ENCODE measurements at regions of chr5 and their contacts with region 1.

Region 1: DNA sequence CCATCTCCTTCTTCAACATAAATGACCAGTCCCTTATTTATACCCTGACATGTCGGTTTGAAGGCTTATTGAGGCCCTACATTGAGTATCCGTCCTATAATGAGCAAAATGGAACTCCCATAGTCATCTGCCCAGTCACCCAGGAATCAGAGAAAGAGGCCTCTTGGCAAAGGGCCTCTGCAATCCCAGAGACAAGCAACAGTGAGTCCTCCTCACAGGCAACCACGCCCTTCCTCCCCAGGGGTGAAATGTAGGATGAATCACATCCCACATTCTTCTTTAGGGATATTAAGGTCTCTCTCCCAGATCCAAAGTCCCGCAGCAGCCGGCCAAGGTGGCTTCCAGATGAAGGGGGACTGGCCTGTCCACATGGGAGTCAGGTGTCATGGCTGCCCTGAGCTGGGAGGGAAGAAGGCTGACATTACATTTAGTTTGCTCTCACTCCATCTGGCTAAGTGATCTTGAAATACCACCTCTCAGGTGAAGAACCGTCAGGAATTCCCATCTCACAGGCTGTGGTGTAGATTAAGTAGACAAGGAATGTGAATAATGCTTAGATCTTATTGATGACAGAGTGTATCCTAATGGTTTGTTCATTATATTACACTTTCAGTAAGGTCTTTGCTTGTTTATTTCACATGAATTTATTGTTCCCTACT is 38.2 kb upstream of the BTNL3 start:
- DNase-seq: no peak
- ATAC-seq: no peak
- H3K4me3 ChIP-seq: no peak overlapping the region
- H3K27ac ChIP-seq: no peak overlapping the region
- H3K4me1 ChIP-seq: no peaks in the 10 kb centered on the region
- H3K27me3 ChIP-seq: no peaks in the 10 kb centered on the region
- CTCF ChIP-seq: no peak

Region 2: DNA sequence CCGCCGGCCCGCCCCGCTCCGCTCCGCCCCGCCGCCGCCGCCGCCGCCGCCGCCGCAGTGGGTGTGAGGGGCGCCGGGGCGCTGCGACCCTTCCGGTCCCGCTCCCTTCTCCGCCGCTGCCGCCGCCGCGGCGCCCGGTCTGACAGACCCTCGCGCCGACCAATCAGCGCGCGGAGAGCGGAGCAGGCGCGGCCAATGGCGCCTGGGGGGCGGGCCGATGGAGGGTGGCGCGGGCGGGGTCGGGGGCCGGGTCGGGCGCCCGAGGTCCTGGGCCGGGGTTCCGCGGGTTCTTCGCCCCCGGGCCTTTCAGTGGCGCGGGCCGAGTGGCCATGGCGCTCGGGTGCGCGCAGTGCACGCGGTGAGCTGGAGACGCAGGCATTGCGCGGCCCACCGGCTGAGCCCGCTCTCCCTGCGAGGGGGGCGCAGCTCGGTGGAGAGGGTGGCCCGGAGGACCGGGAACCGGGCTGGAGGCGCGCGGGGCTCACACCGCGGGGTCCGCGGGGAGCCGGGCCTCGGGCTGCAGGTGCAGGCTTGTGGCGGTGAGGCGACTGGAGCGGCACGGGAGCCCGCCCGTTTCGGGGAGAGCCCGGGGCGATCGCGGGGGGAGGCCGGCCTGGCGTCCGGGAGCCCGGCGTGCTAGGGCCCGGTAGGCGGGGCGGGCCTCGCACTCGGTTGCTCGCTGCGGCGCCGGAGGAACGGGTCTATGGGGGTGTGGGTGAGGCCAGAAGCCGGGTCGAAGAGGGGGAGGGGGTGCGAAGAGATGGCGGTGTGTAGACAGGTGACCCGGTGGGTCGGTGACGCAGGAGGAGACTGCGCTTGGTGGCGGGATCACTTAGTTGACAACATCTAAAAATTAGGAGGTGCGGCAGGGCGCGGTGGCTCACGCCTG is 658.2 kb before region 1 on chr5 and contains the start of gene MAPK9:
- intact Hi-C with region 1: no loop called
- DNase-seq: peak; percentile 84 to 95 (median 88)
- ATAC-seq: peak; percentile 75 to 84 (median 82)
- H3K4me3 ChIP-seq: peak within 1 kb of the TSS; percentile 78 to 100 (median 91)
- H3K27ac ChIP-seq: peak within 1 kb of the TSS; percentile 83 to 90 (median 88)
- H3K4me1 ChIP-seq: peaks cover 14 to 33% (median 15%) of the 10 kb centered on the region in 3 donors
- H3K27me3 ChIP-seq: no peaks in the 10 kb centered on the region
- CTCF ChIP-seq: no peak
- total RNA-seq, gene MAPK9: 25.9 to 40.3 (median 30.6) TPM

Region 3: DNA sequence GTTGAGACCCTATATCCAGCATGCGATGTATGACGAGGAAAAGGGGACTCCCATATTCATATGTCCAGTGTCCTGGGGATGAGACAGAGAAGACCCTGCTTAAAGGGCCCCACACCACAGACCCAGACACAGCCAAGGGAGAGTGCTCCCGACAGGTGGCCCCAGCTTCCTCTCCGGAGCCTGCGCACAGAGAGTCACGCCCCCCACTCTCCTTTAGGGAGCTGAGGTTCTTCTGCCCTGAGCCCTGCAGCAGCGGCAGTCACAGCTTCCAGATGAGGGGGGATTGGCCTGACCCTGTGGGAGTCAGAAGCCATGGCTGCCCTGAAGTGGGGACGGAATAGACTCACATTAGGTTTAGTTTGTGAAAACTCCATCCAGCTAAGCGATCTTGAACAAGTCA is 55.4 kb after region 1 on chr5:
- intact Hi-C with region 1: loop called in 1 of 3 experiments (anchors 2 kb)
- DNase-seq: no peak
- ATAC-seq: no peak
- H3K4me3 ChIP-seq: no peak overlapping the region
- H3K27ac ChIP-seq: no peak overlapping the region
- H3K4me1 ChIP-seq: no peaks in the 10 kb centered on the region
- H3K27me3 ChIP-seq: no peaks in the 10 kb centered on the region
- CTCF ChIP-seq: no peak

Region 4: GRCh38 chr5:181028032-181028819 is 77.8 kb after region 1 on chr5:
- intact Hi-C with region 1: no loop called
- DNase-seq: peak in 3 of 6 donors; percentile 13 to 46 (median 45)
- ATAC-seq: peak in 3 of 4 donors; percentile 70 to 87 (median 73)
- H3K4me3 ChIP-seq: no peak overlapping the region
- H3K27ac ChIP-seq: no peak overlapping the region
- H3K4me1 ChIP-seq: no peaks in the 10 kb centered on the region
- H3K27me3 ChIP-seq: no peaks in the 10 kb centered on the region
- CTCF ChIP-seq: no peak

Measured in pancreas (tissue), 10 donors.